ENCODE measurements at regions of chr15 and their contacts with region 1.

Region 1: GRCh38 chr15:59528965-59529402 is 82.6 kb upstream of the GCNT3 start:
- DNase-seq: peak; percentile 32 to 82 (median 72)
- ATAC-seq: peak; percentile 81
- H3K4me3 ChIP-seq: no peak overlapping the region
- H3K4me3 Mint-ChIP-seq: no peak overlapping the region
- H3K27ac ChIP-seq: no peak overlapping the region
- H3K27ac Mint-ChIP-seq: no peak overlapping the region
- H3K4me1 ChIP-seq: peaks cover 13% of the 10 kb centered on the region
- H3K4me1 Mint-ChIP-seq: peaks cover 23% of the 10 kb centered on the region
- H3K27me3 ChIP-seq: peaks cover 0 to 2% of the 10 kb centered on the region in 2 experiments
- H3K27me3 Mint-ChIP-seq: peaks cover 4% of the 10 kb centered on the region
- CTCF ChIP-seq: peak; percentile 73

Region 2: DNA sequence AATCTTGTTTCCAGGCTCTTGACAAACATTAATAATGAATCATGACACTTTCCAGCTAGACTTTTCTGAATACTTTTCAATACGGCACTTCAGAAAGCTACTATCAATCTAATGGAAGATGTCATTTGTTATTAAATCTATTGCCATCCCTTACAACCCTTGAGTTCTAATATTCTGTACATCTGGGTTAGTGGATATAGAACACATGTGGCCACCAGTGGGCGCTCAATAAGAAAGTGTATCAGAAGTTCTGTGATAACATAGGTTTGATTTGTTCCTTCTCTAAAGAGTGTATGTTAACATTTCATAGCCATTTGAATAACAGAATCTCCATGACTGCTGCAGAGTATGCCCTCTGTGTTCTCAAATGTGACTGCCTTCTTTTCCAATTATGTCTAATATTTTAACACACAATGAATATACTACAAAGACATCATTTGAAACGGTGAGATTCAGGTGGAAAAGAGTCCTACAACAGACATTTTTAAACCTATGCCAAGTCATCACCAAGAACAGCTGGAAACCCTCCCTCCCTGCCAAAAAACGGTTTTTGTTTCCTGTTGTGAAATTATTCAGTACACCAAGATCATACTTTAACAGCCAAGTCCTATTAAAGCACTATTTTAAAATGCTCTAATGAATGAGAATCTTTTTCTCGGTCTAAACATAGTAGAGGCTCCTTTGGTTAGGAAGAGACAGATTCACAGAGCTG is 1485.6 kb before region 1 on chr15:
- CTCF ChIA-PET with region 1: interaction called, 3 read pairs
- POLR2A ChIA-PET with region 1: no interaction called
- intact Hi-C with region 1: loop called in 1 of 2 experiments (anchors 10 kb)
- DNase-seq: peak in 7 of 9 experiments; percentile 8 to 50 (median 32)
- ATAC-seq: no peak
- H3K4me3 ChIP-seq: no peak overlapping the region
- H3K4me3 Mint-ChIP-seq: no peak overlapping the region
- H3K27ac ChIP-seq: no peak overlapping the region
- H3K27ac Mint-ChIP-seq: no peak overlapping the region
- H3K4me1 ChIP-seq: no peaks in the 10 kb centered on the region
- H3K4me1 Mint-ChIP-seq: no peaks in the 10 kb centered on the region
- H3K27me3 ChIP-seq: peaks cover 0 to 4% of the 10 kb centered on the region in 2 experiments
- H3K27me3 Mint-ChIP-seq: peaks cover 34% of the 10 kb centered on the region
- CTCF ChIP-seq: peak; percentile 64

Region 3: DNA sequence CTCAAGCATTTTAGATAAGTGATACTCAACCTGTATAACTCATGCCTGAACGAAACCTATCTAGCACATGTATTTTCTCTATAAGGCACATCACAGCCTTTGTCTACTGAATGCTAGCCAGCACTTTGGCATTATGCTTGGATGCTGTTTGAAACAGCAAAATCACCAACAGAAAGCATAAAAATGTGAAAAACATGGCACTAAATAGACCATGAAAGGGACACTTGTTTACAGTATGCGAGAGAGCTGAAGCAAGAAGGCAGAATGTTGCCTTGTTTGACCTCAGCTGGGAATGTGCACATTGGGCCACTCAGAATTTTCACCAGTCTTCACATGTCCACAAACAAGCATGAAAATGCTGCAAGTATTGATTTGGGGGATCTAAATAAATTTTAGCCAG is 698.4 kb before region 1 on chr15:
- CTCF ChIA-PET with region 1: no interaction called
- POLR2A ChIA-PET with region 1: no interaction called
- intact Hi-C with region 1: no loop called
- DNase-seq: no peak
- ATAC-seq: no peak
- H3K4me3 ChIP-seq: no peak overlapping the region
- H3K4me3 Mint-ChIP-seq: no peak overlapping the region
- H3K27ac ChIP-seq: no peak overlapping the region
- H3K27ac Mint-ChIP-seq: no peak overlapping the region
- H3K4me1 ChIP-seq: no peaks in the 10 kb centered on the region
- H3K4me1 Mint-ChIP-seq: no peaks in the 10 kb centered on the region
- H3K27me3 ChIP-seq: no peaks in the 10 kb centered on the region
- H3K27me3 Mint-ChIP-seq: no peaks in the 10 kb centered on the region
- CTCF ChIP-seq: no peak

Region 4: GRCh38 chr15:58957101-58957973 is 571.6 kb before region 1 on chr15:
- CTCF ChIA-PET with region 1: interaction called, 10 read pairs
- POLR2A ChIA-PET with region 1: no interaction called
- intact Hi-C with region 1: loop called (anchors 1 kb)
- DNase-seq: peak; percentile 18 to 84 (median 61)
- ATAC-seq: peak; percentile 96
- H3K4me3 ChIP-seq: no peak overlapping the region
- H3K4me3 Mint-ChIP-seq: no peak overlapping the region
- H3K27ac ChIP-seq: no peak overlapping the region
- H3K27ac Mint-ChIP-seq: no peak overlapping the region
- H3K4me1 ChIP-seq: no peaks in the 10 kb centered on the region
- H3K4me1 Mint-ChIP-seq: peaks cover 10% of the 10 kb centered on the region
- H3K27me3 ChIP-seq: no peaks in the 10 kb centered on the region
- H3K27me3 Mint-ChIP-seq: no peaks in the 10 kb centered on the region
- CTCF ChIP-seq: peak; percentile 82

Region 5: DNA sequence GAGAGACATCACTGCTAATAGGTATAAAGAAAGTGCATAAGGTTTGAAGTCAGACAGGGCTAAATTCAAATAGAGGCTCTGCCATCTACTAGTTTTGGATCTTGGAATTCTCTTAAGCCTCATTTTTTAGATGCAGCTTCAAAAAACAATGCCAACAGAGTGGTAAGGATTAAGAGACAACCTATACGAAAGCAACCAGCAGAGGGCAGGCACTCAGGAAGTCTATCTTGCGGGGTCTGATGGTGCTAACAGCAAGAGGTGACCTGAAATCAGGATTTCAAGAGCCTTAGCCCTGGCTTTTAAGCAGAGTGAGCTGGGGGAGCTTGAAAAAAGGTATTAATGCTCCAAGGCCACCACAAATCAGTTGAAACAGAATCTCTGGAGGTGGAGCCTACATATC is 281.6 kb before region 1 on chr15:
- CTCF ChIA-PET with region 1: interaction called, 48 read pairs
- POLR2A ChIA-PET with region 1: no interaction called
- intact Hi-C with region 1: no loop called
- DNase-seq: peak; percentile 20 to 76 (median 55)
- ATAC-seq: peak; percentile 68
- H3K4me3 ChIP-seq: no peak overlapping the region
- H3K4me3 Mint-ChIP-seq: no peak overlapping the region
- H3K27ac ChIP-seq: no peak overlapping the region
- H3K27ac Mint-ChIP-seq: no peak overlapping the region
- H3K4me1 ChIP-seq: no peaks in the 10 kb centered on the region
- H3K4me1 Mint-ChIP-seq: peaks cover 3% of the 10 kb centered on the region
- H3K27me3 ChIP-seq: no peaks in the 10 kb centered on the region
- H3K27me3 Mint-ChIP-seq: no peaks in the 10 kb centered on the region
- CTCF ChIP-seq: peak; percentile 48

Region 6: DNA sequence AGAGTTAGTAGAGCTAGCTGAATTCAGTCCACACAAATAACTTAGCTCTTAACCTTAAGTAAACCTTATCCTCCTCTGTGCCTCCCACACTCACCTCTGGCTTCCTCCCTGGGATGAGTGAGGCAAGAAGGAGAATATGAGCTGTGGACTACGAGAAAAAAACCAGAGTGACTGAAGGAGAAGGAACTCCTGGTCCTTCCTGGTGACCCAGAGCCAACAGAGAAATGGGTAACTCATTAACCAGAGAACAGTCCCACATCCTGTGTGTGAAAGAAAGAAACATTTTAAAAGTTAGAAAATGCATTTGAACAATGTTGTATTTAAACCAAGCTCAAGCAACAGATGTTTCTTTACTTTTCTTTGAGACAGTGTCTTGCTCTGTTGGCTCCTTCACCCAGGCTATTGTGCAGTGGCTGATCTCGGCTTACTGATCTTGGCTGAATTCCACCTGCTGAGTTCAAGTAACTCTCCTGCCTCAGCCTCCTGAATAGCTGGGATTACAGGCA is 118.5 kb before region 1 on chr15:
- CTCF ChIA-PET with region 1: no interaction called
- POLR2A ChIA-PET with region 1: no interaction called
- intact Hi-C with region 1: no loop called
- DNase-seq: no peak
- ATAC-seq: no peak
- H3K4me3 ChIP-seq: no peak overlapping the region
- H3K4me3 Mint-ChIP-seq: no peak overlapping the region
- H3K27ac ChIP-seq: no peak overlapping the region
- H3K27ac Mint-ChIP-seq: no peak overlapping the region
- H3K4me1 ChIP-seq: peaks cover 16% of the 10 kb centered on the region
- H3K4me1 Mint-ChIP-seq: peaks cover 30% of the 10 kb centered on the region
- H3K27me3 ChIP-seq: peaks cover 0 to 2% of the 10 kb centered on the region in 2 experiments
- H3K27me3 Mint-ChIP-seq: peaks cover 13% of the 10 kb centered on the region
- CTCF ChIP-seq: no peak

Region 7: DNA sequence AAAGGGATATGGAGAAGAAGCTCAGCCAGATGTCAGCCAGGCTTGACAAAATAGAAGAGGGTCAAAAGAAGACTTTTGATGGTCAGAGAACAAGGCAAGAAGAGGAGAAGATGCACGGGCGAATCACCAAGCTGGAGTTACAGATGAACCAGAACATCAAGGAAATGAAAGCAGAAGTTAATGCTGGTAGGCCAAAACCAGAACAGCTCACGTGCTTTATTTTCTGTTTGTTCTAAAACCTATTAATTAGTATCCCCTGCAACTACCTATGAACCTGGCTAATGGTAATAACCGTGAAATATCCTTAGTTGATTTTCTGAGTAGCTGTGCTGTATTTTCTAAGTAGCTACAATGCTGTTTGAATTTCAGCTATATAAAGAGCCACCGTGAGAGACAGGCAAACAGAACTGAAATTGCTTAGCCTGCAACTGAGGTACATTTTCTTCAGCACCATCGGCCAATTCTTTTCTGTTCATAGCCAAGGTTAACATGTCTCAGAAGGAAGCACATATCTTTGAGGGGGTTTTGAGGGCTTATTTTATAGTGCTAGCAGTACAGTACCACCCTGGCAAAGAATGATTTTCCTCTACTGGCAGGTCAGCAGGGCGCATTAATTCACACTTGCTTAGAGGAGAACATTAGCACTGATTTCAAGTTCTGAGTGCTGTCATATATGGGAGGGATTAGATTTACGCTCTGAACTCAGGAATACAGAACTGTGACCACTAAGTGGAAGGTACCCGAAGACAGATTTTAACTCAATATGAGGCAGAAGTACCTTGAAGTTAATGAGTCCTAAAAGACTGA is 12.1 kb before region 1 on chr15:
- CTCF ChIA-PET with region 1: interaction called, 32 read pairs
- POLR2A ChIA-PET with region 1: interaction called, 3 read pairs
- intact Hi-C with region 1: no loop called
- DNase-seq: no peak
- ATAC-seq: no peak
- H3K4me3 ChIP-seq: no peak overlapping the region
- H3K4me3 Mint-ChIP-seq: no peak overlapping the region
- H3K27ac ChIP-seq: no peak overlapping the region
- H3K27ac Mint-ChIP-seq: no peak overlapping the region
- H3K4me1 ChIP-seq: no peaks in the 10 kb centered on the region
- H3K4me1 Mint-ChIP-seq: peaks cover 16% of the 10 kb centered on the region
- H3K27me3 ChIP-seq: peaks cover 0 to 3% of the 10 kb centered on the region in 2 experiments
- H3K27me3 Mint-ChIP-seq: peaks cover 3% of the 10 kb centered on the region
- CTCF ChIP-seq: no peak

Measured in CD8-positive, alpha-beta T cell (primary cell).